Head of caudate nucleus (tissue), 42 donors: ENCODE measurements at regions of chr14 and their contacts with region 1.

Region 1: GRCh38 chr14:75002392-75003249 is at the start of gene EIF2B2:
- DNase-seq: peak; percentile 97 to 100 (median 99)

Region 2: DNA sequence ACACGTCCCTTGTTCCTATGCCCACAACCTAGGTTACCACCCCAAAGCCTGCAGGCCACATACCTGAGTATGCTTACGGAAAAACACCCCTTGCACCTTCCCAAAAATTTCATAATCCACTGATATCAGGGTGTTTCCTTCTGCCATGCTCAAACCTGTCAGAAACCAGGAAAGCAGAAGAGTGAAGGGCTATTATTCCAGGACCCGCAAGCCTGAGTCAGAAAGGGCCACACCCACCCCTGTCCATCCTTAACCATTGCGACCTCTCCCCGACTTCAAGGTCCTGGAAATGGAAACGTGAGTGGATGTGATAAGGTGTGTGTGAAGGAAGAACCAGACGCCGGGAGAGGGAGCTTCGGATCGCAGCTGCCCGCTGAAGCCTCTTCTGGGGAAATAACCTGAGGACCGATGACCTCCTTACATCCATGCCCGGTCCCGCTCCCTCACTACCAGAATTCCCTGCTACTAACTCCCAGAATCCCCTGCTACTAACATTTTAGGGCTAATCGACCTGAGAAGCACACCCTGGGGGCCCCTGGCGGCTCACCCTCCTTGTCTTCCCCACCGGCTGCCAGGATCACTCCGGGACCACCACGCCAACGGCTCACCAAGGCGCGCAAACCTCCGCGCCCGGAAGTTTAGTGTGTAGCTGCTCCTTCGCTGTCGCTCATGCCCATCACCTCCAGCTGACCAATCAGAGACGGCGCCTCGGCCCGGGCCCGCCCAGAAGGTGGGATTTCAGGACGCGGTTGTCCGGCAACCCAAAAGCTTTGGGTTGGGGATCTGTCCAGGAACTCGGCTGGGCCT is 61.0 kb after region 1 on chr14 and contains the start of gene ACYP1:
- intact Hi-C with region 1: loop called (anchors 10 kb)
- DNase-seq: peak; percentile 88 to 97 (median 94)

Region 3: DNA sequence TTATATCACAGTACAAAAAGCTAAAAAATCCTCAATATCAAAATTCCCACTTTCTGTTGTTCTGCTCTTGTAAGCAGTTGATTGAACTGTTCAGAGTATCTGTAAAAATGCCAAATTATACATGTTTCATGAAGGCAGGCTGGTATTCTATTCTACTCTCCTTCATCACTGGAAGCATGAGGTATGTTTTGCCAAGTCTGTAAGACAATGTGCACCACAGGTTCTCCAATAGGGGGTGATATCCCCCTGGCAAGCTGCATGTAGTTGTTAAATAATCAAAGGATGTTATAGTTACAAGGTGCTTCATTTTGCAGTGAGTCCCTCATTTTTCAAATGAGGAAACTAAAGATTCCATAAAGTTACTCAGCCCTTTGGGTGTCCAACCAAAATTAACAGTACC is 139.3 kb after region 1 on chr14:
- intact Hi-C with region 1: no loop called
- DNase-seq: peak in 1 of 42 donors; percentile 42

Region 4: GRCh38 chr14:75182841-75183624 is 180.4 kb after region 1 on chr14:
- intact Hi-C with region 1: no loop called
- DNase-seq: no peak

Region 5: GRCh38 chr14:75985618-75986438 is 983.2 kb after region 1 on chr14 and contains the start of gene IFT43:
- intact Hi-C with region 1: no loop called
- DNase-seq: peak; percentile 91 to 98 (median 96)